ENCODE measurements at regions of chr9 and their contacts with region 1.

Region 1: GRCh38 chr9:22079873-22080341 is 70.8 kb upstream of the CDKN2B start:
- DNase-seq: peak; percentile 84
- H3K4me3 Mint-ChIP-seq: no peak overlapping the region
- H3K27ac Mint-ChIP-seq: no peak overlapping the region
- H3K4me1 Mint-ChIP-seq: peaks cover 33% of the 10 kb centered on the region
- H3K27me3 Mint-ChIP-seq: peaks cover 50% of the 10 kb centered on the region

Region 2: GRCh38 chr9:21357479-21358460 is 722.1 kb before region 1 on chr9:
- CTCF ChIA-PET with region 1: no interaction called
- intact Hi-C with region 1: loop called (anchors 1 kb)
- DNase-seq: peak; percentile 28
- H3K4me3 Mint-ChIP-seq: peak overlapping the region; percentile 36
- H3K27ac Mint-ChIP-seq: no peak overlapping the region
- H3K4me1 Mint-ChIP-seq: peaks cover 19% of the 10 kb centered on the region
- H3K27me3 Mint-ChIP-seq: peaks cover 13% of the 10 kb centered on the region

Region 3: GRCh38 chr9:21761309-21761901 is 318.5 kb before region 1 on chr9:
- CTCF ChIA-PET with region 1: no interaction called
- intact Hi-C with region 1: loop called (anchors 1 kb)
- DNase-seq: peak; percentile 60
- H3K4me3 Mint-ChIP-seq: no peak overlapping the region
- H3K27ac Mint-ChIP-seq: no peak overlapping the region
- H3K4me1 Mint-ChIP-seq: peaks cover 13% of the 10 kb centered on the region
- H3K27me3 Mint-ChIP-seq: peaks cover 29% of the 10 kb centered on the region

Region 4: GRCh38 chr9:21995177-21996086 is 84.5 kb before region 1 on chr9:
- CTCF ChIA-PET with region 1: no interaction called
- intact Hi-C with region 1: loop called (anchors 1 kb)
- DNase-seq: peak; percentile 77
- H3K4me3 Mint-ChIP-seq: peak overlapping the region; percentile 87
- H3K27ac Mint-ChIP-seq: peak overlapping the region; percentile 36
- H3K4me1 Mint-ChIP-seq: peaks cover 10% of the 10 kb centered on the region
- H3K27me3 Mint-ChIP-seq: peaks cover 42% of the 10 kb centered on the region

Region 5: GRCh38 chr9:22030101-22030598 is 49.8 kb before region 1 on chr9:
- CTCF ChIA-PET with region 1: no interaction called
- intact Hi-C with region 1: no loop called
- DNase-seq: no peak
- H3K4me3 Mint-ChIP-seq: no peak overlapping the region
- H3K27ac Mint-ChIP-seq: no peak overlapping the region
- H3K4me1 Mint-ChIP-seq: no peaks in the 10 kb centered on the region
- H3K27me3 Mint-ChIP-seq: peaks cover 19% of the 10 kb centered on the region

Region 6: DNA sequence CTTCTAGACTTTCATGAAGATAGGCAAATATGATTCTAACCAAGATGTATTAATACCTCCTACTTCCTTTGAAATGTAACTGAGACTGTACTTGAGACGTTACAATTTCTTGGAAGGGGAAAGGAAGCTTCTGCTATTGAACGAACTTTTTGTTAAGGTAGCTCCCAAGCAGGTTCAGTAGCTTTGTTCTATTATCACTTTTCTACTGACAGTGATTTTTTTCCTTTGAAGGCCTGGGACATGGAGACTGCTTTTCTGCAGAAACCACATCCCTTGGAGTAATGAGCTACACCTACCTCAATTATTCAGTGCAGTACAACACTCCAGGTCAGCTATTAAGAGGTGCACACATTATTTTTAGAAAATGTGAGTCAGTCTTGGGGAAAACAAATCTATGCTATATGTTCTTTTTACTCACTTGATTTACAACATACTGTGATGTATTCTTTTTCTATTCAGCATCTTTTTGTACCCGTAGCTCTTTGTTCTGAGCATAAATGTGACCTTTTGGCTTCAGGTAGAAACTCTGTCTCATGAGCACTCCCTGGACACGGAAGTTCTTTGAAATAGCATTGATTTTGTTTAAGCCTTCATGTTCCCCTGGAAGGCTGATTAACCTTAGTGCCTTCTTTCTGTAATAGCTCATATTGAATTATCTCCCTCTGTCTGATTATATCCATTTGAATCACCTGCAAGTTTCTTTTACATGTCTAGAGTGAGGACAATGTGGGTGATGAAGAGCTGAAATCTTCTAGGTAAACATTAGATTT is 14.3 kb before region 1 on chr9:
- CTCF ChIA-PET with region 1: interaction called, 4 read pairs
- intact Hi-C with region 1: loop called (anchors 1 kb)
- DNase-seq: no peak
- H3K4me3 Mint-ChIP-seq: no peak overlapping the region
- H3K27ac Mint-ChIP-seq: no peak overlapping the region
- H3K4me1 Mint-ChIP-seq: peaks cover 21% of the 10 kb centered on the region
- H3K27me3 Mint-ChIP-seq: peaks cover 16% of the 10 kb centered on the region

Region 7: GRCh38 chr9:22208846-22209585 is 129.1 kb after region 1 on chr9:
- CTCF ChIA-PET with region 1: interaction called, 4 read pairs
- intact Hi-C with region 1: loop called (anchors 1 kb)
- DNase-seq: peak; percentile 14
- H3K4me3 Mint-ChIP-seq: no peak overlapping the region
- H3K27ac Mint-ChIP-seq: no peak overlapping the region
- H3K4me1 Mint-ChIP-seq: peaks cover 22% of the 10 kb centered on the region
- H3K27me3 Mint-ChIP-seq: no peaks in the 10 kb centered on the region

Region 8: DNA sequence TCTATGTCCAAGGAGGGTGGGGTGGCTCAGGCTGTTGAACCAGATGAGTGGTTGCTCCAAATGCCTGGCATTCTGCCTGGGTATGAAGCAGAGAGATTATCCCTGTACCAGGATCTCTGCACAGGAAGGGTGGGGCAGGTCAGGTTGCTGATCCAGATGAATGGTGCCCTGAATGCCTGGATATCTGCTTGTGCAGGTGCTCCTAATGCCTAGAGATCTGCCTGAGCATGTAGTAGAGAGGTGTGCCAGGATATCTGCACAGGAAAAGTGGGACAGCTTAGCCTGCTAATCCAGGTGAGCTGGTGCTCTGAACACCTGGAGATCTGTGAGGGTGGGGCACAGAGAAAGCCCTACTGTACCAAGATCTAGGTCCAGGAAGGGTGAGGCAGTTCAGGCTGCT is 177.1 kb after region 1 on chr9:
- CTCF ChIA-PET with region 1: no interaction called
- intact Hi-C with region 1: no loop called
- DNase-seq: no peak
- H3K4me3 Mint-ChIP-seq: no peak overlapping the region
- H3K27ac Mint-ChIP-seq: no peak overlapping the region
- H3K4me1 Mint-ChIP-seq: no peaks in the 10 kb centered on the region
- H3K27me3 Mint-ChIP-seq: peaks cover 9% of the 10 kb centered on the region

Region 9: DNA sequence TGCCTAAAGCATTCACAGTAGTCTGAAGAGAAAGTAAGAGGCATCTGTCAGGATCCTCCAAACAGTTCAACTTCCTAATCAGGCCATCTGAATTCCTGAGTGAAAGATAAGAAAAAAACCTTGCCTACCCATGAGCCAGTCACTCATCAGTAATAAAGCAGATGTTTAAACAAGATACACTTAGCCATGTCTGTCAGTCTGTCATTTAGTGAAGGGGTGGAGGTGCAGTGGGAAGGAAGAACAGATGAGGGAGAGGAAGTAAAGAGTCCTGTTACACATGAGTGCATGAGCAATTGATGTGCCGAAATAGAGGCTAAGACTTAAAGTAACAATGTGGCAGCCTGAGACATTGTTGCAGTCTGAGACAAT is 336.8 kb after region 1 on chr9:
- CTCF ChIA-PET with region 1: no interaction called
- intact Hi-C with region 1: no loop called
- DNase-seq: no peak
- H3K4me3 Mint-ChIP-seq: no peak overlapping the region
- H3K27ac Mint-ChIP-seq: no peak overlapping the region
- H3K4me1 Mint-ChIP-seq: no peaks in the 10 kb centered on the region
- H3K27me3 Mint-ChIP-seq: no peaks in the 10 kb centered on the region